ENCODE measurements at regions of chr4 and their contacts with region 1.

Region 1: DNA sequence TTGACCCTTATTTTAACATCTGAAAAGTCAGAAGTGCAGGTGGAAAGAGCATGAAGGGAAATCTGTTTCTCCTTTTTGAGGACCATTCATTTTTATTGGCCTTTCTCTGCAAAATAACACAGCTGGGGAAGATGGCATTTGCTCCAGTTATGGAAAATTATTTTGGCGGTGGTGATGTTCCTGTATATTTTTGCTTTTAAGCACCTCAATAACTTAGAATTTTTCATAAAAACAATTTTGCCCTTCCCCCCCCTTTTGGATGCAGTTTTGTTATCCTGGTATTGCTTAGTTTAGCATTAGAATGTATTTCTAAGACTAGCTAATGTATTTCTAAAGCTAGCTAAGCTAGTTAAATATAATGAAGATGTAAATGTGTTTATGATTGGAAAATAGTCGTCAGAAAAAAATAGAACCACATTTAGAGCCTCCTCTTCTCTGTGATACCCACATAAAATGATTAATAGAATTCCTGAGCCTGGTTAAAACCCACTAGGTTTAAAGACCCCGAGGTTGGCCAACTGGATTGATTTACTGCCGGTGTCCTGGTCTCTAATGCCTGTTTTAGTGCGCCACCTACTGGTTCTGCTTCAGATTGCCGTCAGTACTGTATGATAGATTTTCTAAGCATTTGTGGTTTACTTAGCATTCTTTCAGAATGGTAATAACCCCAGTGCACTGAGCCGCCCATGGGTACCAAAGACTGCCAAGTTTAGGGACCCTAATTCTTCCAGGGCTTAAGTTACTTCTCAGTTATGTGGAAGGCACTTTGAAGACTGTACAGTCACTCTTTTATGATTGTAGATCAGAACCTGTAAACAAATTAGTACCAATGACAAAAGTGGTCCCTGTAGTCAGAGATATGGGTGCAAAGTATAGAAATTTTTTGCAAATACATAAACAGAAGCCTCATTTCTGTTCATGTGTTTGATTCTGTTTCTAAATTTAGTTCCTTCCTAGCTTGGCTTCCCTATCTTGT is 11.4 kb downstream of the KLF3 start:
- DNase-seq: peak; percentile 78
- H3K4me3 ChIP-seq: no peak overlapping the region
- H3K27ac ChIP-seq: no peak overlapping the region
- H3K4me1 ChIP-seq: peaks cover 4% of the 10 kb centered on the region
- CTCF ChIP-seq: peak; percentile 99

Region 2: GRCh38 chr4:37305984-37306383 is 1369.5 kb before region 1 on chr4:
- CTCF ChIA-PET with region 1: no interaction called
- POLR2A ChIA-PET with region 1: no interaction called
- intact Hi-C with region 1: no loop called
- DNase-seq: no peak
- H3K4me3 ChIP-seq: no peak overlapping the region
- H3K27ac ChIP-seq: no peak overlapping the region
- H3K4me1 ChIP-seq: no peaks in the 10 kb centered on the region
- CTCF ChIP-seq: no peak

Region 3: DNA sequence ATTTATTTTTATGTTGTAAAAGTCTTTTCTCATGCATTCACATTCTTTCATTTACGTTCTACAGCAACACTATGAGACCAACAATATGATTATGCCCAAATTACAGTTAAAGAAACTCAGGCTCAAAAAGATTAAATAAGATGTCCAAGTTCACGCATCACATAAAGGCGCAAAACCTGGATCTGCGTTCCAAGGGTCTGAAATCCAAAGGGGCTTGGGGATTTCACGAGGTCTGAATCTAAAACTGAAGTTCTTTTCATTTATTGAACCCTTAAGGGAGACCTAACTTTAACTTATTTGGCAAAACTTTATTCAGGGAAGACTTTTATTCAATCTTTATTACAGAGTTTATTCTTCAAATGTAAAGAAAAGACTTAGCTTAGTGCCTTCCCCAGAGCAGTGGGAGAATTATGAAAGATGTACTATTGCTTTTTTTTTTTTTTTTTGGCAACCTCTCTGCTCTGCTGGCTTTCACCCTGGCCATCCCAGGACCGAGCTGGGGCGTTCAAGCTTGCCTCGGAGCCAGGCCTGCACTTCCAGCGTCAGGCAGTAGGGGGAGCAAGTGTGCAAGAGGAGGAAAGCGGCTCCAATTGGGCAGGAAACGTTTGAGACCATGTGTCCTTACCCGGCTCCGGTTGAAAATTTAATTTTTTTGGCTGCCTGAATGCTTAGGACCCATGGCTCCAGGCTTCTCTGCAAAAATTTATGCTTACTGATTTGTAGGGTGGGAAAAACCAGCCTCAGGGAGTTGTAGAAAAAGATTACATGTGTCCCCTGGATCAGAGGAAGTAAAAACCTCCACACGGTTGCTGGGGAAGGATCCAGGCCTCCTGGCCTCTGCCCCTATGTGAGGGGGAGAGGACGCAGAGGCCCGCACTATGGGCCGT is 355.7 kb before region 1 on chr4:
- CTCF ChIA-PET with region 1: no interaction called
- POLR2A ChIA-PET with region 1: interaction called, 5 read pairs
- intact Hi-C with region 1: loop called (anchors 1 kb)
- DNase-seq: peak; percentile 70
- H3K4me3 ChIP-seq: peak overlapping the region; percentile 32
- H3K27ac ChIP-seq: no peak overlapping the region
- H3K4me1 ChIP-seq: peaks cover 16% of the 10 kb centered on the region
- CTCF ChIP-seq: peak; percentile 95

Region 4: GRCh38 chr4:38634047-38634759 is 41.2 kb before region 1 on chr4:
- CTCF ChIA-PET with region 1: no interaction called
- POLR2A ChIA-PET with region 1: no interaction called
- intact Hi-C with region 1: no loop called
- DNase-seq: no peak
- H3K4me3 ChIP-seq: no peak overlapping the region
- H3K27ac ChIP-seq: no peak overlapping the region
- H3K4me1 ChIP-seq: no peaks in the 10 kb centered on the region
- CTCF ChIP-seq: no peak

Region 5: DNA sequence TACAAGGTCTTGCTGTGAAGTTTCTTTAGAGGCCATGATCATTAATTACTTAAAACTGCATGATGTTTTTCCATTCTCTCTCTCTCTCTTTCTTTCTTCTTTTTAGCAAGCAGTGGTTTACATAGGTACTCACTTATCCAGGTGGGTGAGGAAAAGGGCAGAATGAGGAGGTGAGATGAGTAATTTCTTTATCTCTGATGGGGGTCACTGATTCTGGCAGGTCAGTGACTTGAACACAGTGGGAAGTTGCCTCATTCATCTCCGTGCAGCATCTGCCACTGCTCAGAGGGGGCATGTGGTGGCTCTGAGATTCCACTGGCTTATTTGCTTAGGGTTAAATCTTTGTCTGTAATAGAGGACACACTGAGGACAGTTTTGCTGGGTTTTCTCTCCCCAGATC is 254.8 kb after region 1 on chr4:
- CTCF ChIA-PET with region 1: no interaction called
- POLR2A ChIA-PET with region 1: no interaction called
- intact Hi-C with region 1: no loop called
- DNase-seq: no peak
- H3K4me3 ChIP-seq: no peak overlapping the region
- H3K27ac ChIP-seq: no peak overlapping the region
- H3K4me1 ChIP-seq: no peaks in the 10 kb centered on the region
- CTCF ChIP-seq: no peak